Caco-2 (cell line): ENCODE measurements at regions of chr17 and their contacts with region 1.

Region 1: DNA sequence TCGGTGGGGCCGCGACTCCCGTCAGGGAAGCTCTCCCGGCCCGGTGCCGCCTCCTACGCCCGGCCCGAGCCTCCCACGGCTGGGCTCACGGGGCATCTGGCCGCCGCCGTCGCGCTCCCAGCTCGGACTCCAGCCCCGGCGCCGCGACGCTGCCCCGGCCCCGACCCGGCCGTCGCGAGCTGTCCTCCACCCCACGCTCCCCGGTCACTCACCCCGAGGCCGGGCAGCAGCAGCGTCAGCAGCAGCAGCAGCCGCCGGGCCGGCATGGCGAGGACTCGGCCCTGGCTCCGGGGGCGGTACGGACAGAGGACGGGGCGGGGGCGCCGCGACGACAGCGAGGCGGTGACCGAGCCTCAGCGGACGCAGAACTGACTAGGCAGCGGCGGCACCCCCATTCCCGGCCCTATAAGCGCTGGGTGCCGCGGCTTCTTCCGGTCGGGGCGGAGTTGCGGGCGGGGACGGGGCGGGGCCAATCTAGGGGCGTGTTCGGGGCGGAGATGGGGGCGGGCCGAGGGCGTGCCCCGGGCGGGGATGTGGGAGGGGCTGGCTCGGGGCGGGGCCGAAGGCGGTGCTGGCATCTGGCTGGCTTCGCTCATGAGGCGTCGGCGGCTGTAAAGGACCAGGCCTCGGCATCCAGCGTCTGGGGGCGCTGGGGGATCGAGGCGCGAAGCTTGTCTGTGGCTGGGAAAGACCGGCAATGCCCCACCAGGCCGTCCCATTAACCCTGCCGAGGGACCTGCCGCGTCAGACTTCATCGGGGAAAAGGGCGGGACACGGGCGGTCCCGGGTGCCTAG is at the start of gene ERN1:
- DNase-seq: peak; percentile 93 to 95
- H3K4me3 ChIP-seq: peak within 1 kb of the TSS; percentile 78
- H3K4me3 Mint-ChIP-seq: peak within 1 kb of the TSS; percentile 91
- H3K27ac Mint-ChIP-seq: peak within 1 kb of the TSS; percentile 88
- H3K4me1 ChIP-seq: peaks cover 21% of the 10 kb centered on the region
- H3K4me1 Mint-ChIP-seq: peaks cover 16% of the 10 kb centered on the region
- H3K27me3 ChIP-seq: no peaks in the 10 kb centered on the region
- H3K27me3 Mint-ChIP-seq: no peaks in the 10 kb centered on the region
- CTCF ChIP-seq: peak in 1 of 2 experiments; percentile 4
- total RNA-seq, gene ERN1: 24.3 and 27.5 TPM in 2 replicates

Region 2: DNA sequence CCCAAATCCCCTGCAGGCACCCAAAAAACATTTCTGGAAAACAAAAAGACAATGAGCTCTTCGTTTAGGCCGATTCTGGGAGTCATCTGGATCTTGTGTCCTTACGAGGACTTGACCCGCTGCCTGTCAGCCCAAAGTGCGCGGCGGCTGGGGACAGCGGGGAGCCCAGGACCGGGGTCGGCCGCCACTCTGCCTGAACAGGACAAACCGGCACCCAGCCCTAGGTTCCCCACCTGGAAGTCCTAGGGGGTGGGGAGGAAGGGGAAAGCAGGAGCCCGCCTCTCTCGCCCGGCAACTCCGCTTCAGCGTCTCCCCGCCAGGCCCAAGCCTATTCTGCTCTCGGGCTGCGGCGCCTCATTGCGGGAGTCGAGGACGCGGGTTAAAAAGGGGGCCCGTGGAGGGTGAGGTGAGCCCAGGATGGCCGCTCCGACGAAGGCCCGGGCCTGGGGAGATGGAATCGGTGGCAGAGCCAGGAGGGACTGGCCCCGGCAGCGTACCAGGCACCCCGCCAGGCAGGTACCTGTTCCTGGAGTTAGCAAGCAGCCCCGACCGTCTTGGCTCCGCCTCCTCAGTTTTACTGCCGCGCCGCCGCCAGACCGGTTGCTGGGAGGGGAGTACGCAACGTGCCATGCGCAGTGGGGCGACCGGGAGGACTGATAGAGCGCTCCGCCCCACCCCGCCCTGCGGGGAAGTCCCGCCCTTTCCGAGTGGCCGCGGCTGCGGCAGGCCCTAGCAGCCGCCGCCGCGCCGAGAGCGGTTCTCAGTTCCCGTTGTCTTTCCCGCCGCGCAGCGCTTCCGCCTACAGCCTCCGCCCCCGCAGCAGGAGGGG is 388.5 kb before region 1 on chr17 and contains the start of gene STRADA:
- CTCF ChIA-PET with region 1: interaction called, 11 read pairs
- POLR2A ChIA-PET with region 1: no interaction called
- intact Hi-C with region 1: no loop called
- DNase-seq: peak; percentile 100
- H3K4me3 ChIP-seq: peak within 1 kb of the TSS; percentile 83
- H3K4me3 Mint-ChIP-seq: peak within 1 kb of the TSS; percentile 96
- H3K27ac Mint-ChIP-seq: peak within 1 kb of the TSS; percentile 96
- H3K4me1 ChIP-seq: peaks cover 9% of the 10 kb centered on the region
- H3K4me1 Mint-ChIP-seq: peaks cover 6% of the 10 kb centered on the region
- H3K27me3 ChIP-seq: no peaks in the 10 kb centered on the region
- H3K27me3 Mint-ChIP-seq: no peaks in the 10 kb centered on the region
- CTCF ChIP-seq: no peak
- total RNA-seq, gene STRADA: 23.4 and 24.7 TPM in 2 replicates

Region 3: DNA sequence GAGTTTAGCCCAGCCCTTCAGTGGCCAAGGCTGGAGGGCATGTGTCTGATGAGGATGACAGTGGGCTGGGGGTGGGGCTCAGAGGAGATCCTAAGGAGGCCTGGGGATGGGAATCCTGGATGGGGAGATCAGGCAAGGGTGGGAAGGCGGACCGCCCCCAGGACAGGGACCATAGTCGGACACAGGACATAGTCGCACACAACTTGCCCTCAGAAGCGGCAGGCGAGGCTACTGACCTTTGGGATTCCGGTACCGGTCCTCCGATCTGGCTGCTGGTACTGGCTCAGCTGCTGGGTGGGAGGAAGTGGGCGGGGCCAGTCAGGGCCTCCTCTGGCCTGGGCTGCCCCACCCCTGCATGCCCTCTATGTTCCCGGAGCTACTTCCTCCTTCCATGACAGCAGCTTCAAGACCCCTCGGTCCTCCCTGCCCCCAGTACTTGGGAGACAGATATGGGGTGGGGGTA is 198.8 kb before region 1 on chr17:
- CTCF ChIA-PET with region 1: no interaction called
- POLR2A ChIA-PET with region 1: no interaction called
- intact Hi-C with region 1: no loop called
- DNase-seq: no peak
- H3K4me3 ChIP-seq: no peak overlapping the region
- H3K4me3 Mint-ChIP-seq: no peak overlapping the region
- H3K27ac Mint-ChIP-seq: no peak overlapping the region
- H3K4me1 ChIP-seq: no peaks in the 10 kb centered on the region
- H3K4me1 Mint-ChIP-seq: no peaks in the 10 kb centered on the region
- H3K27me3 ChIP-seq: no peaks in the 10 kb centered on the region
- H3K27me3 Mint-ChIP-seq: peaks cover 1% of the 10 kb centered on the region
- CTCF ChIP-seq: no peak

Region 4: GRCh38 chr17:64020056-64020766 is 109.8 kb before region 1 on chr17 and contains the start of gene ICAM2:
- CTCF ChIA-PET with region 1: interaction called, 277 read pairs
- POLR2A ChIA-PET with region 1: no interaction called
- intact Hi-C with region 1: no loop called
- DNase-seq: no peak
- H3K4me3 ChIP-seq: peak within 1 kb of the TSS; percentile 4; the same call in 1 of the 2 replicates
- H3K4me3 Mint-ChIP-seq: peak within 1 kb of the TSS; percentile 23
- H3K27ac Mint-ChIP-seq: no peak within 1 kb of the TSS
- H3K4me1 ChIP-seq: no peaks in the 10 kb centered on the region
- H3K4me1 Mint-ChIP-seq: peaks cover 10% of the 10 kb centered on the region
- H3K27me3 ChIP-seq: no peaks in the 10 kb centered on the region
- H3K27me3 Mint-ChIP-seq: peaks cover 2% of the 10 kb centered on the region
- CTCF ChIP-seq: no peak
- total RNA-seq, gene ICAM2: 1.9 and 2.0 TPM in 2 replicates

Region 5: GRCh38 chr17:64056269-64057005 is 73.5 kb before region 1 on chr17:
- CTCF ChIA-PET with region 1: interaction called, 206 read pairs
- POLR2A ChIA-PET with region 1: no interaction called
- intact Hi-C with region 1: no loop called
- DNase-seq: peak; percentile 35 to 62
- H3K4me3 ChIP-seq: no peak overlapping the region
- H3K4me3 Mint-ChIP-seq: no peak overlapping the region
- H3K27ac Mint-ChIP-seq: no peak overlapping the region
- H3K4me1 ChIP-seq: peaks cover 13% of the 10 kb centered on the region; the same call in 1 of the 2 replicates
- H3K4me1 Mint-ChIP-seq: peaks cover 15% of the 10 kb centered on the region
- H3K27me3 ChIP-seq: no peaks in the 10 kb centered on the region
- H3K27me3 Mint-ChIP-seq: no peaks in the 10 kb centered on the region
- CTCF ChIP-seq: no peak

Region 6: DNA sequence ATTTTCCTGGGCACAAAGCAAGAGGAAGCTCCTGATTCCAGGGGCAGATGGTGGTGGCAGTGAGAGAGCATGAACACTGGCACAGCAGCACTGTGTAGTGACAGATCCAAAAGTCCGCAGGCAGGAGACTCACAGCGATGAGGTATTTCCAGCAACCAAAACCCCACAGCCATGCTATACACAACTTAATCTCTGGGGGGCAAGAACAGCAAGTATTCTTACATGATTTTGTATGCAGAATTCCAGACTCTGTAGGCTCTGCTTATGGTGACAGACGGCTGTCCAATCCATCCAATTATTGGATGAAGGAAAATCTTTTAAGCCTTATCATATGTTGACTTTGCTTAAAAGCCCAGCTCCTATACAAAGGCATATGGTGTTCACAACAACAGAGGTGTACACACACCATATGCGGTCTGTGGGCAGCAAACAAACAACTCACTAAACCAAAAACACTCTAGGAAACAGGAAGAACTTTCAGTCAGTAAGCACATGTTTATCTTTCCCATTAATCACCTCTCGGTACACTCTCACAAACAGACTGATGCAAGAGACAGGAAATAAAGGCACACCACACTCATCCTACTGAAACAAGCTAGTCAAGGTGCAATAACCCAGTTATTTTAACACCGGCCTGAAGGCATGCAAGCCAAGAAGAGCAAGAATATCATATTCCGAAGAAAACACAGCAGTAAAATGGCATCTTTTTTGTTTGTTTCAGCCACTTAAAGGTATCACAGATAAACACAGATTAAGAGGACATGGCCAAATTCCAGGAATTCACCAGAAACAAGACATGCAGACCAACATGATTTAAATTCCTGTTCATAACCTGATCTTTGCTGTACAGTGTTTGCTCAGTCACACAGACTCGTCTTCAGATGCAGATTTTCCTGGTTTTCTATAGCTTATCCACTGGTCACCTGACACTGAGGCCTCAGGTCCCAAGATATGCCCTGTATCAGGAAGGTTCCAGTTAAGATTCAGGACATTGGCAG is 47.9 kb before region 1 on chr17:
- CTCF ChIA-PET with region 1: interaction called, 24 read pairs
- POLR2A ChIA-PET with region 1: interaction called, 11 read pairs
- intact Hi-C with region 1: loop called (anchors 1 kb)
- DNase-seq: peak in 1 of 2 experiments; percentile 78
- H3K4me3 ChIP-seq: no peak overlapping the region
- H3K4me3 Mint-ChIP-seq: peak overlapping the region; percentile 57
- H3K27ac Mint-ChIP-seq: no peak overlapping the region
- H3K4me1 ChIP-seq: peaks cover 46% of the 10 kb centered on the region
- H3K4me1 Mint-ChIP-seq: peaks cover 28% of the 10 kb centered on the region
- H3K27me3 ChIP-seq: no peaks in the 10 kb centered on the region
- H3K27me3 Mint-ChIP-seq: no peaks in the 10 kb centered on the region
- CTCF ChIP-seq: peak in 1 of 2 experiments; percentile 15

Region 7: DNA sequence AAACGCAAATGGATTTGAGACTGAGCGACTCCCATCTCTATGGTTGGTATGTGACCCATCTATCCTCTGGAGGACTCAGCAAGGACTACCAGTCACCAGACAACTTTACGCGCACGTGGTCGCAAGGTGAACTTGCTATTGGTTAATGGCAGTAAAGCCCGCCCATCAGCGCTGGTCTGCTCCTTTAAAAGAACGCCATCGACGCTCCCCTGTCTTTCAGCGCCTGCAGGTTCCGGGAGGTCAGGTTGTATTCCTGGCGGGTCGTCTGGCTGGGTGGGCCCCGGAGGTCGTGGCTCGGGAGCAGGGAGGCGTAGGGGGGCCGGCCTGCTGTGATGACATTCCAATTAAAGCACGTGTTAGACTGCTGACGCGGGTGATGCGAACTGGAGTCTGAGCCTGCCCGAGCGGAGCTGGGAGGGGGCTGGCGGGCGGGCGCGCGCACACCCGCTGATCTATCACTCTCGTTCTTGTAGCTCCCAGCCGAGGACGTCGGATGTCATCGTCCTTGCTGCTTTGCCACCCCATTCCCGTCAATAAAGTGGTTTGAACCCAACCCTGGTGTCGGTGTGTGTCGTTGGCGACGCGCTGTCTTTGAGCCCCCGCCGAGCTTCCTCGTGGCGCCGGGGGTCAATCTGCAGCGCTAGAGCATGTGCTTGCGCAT is 15.9 kb after region 1 on chr17:
- CTCF ChIA-PET with region 1: interaction called, 19 read pairs
- POLR2A ChIA-PET with region 1: interaction called, 25 read pairs
- intact Hi-C with region 1: no loop called
- DNase-seq: peak; percentile 97 to 99
- H3K4me3 ChIP-seq: peak overlapping the region; percentile 81
- H3K4me3 Mint-ChIP-seq: no peak overlapping the region
- H3K27ac Mint-ChIP-seq: no peak overlapping the region
- H3K4me1 ChIP-seq: no peaks in the 10 kb centered on the region
- H3K4me1 Mint-ChIP-seq: peaks cover 20% of the 10 kb centered on the region
- H3K27me3 ChIP-seq: no peaks in the 10 kb centered on the region
- H3K27me3 Mint-ChIP-seq: no peaks in the 10 kb centered on the region
- CTCF ChIP-seq: no peak

Region 8: GRCh38 chr17:64291254-64291851 is 161.4 kb after region 1 on chr17:
- CTCF ChIA-PET with region 1: interaction called, 13 read pairs
- POLR2A ChIA-PET with region 1: no interaction called
- intact Hi-C with region 1: no loop called
- DNase-seq: peak in 1 of 2 experiments; percentile 66
- H3K4me3 ChIP-seq: no peak overlapping the region
- H3K4me3 Mint-ChIP-seq: no peak overlapping the region
- H3K27ac Mint-ChIP-seq: no peak overlapping the region
- H3K4me1 ChIP-seq: no peaks in the 10 kb centered on the region
- H3K4me1 Mint-ChIP-seq: peaks cover 3% of the 10 kb centered on the region
- H3K27me3 ChIP-seq: no peaks in the 10 kb centered on the region
- H3K27me3 Mint-ChIP-seq: no peaks in the 10 kb centered on the region
- CTCF ChIP-seq: peak; percentile 59 to 69